PC-9 (cell line): ENCODE measurements at regions of chr15 and their contacts with region 1.

Region 1: DNA sequence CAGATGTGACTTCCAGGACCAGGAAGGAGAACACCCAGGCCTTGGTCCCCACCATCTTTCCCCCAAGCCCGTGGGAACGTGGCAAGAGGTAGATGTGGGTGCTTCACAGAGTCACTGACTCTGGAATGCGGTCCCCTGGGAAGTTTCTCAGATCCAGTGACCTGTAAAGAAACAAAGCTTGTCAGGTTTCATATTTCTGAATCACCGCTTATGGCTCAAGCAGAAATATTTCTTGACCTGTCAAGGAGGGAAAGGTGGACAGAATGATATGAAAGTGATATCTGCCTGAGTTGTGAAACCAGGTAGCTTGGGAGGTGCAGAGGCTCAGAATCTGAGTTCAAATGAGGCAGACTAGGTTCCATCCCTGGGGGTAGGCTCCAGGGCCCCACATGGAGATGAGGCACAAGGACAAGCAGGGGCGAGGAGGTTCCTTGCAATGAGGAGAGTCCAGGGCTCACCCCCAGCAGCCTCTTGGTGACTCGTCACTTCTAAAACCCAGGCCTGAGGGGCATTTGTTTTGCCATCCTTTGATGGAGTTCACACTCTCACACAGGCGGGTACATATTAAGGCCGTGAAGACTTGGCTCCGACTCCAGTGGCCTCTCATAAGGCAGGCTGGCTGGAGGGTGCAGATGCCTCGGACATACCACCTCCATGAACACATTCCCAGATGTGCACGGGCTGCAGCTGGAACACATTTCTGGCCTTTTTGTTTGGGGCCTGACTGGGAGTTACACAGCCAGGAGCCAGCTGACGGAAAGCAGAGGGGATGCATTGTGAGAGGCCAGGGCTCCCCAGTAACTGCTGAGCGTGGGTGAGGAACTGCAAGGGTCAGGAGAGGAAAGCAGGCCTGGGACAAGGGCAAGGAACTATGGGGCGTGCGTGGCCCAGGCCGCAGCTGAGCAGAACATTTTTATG is 1.3 kb downstream of the CILP start:
- DNase-seq: peak; percentile 44 to 86
- H3K4me3 ChIP-seq: no peak overlapping the region
- H3K27ac ChIP-seq: peak overlapping the region; percentile 50
- H3K4me1 ChIP-seq: peaks cover 34% of the 10 kb centered on the region
- H3K27me3 ChIP-seq: no peaks in the 10 kb centered on the region
- CTCF ChIP-seq: no peak

Region 2: DNA sequence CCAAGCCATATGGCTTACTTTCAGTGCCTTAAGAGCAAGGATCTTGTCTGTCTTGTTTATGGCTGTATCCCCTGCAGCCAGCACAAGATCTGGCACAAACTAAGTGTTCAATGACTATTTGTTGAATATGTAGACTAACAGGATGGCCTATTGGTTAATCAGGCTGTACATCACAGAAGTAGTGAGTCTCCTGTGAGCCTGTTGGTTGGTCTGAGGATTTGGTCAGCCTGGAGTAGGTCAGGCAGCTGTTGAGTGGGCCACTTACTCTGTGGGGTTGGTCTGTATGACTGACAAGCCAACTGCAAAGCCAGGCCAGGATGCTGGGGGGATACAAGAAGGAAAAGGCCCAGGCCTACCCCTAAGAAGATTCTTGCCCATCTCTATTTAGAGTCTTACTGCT is 34.7 kb after region 1 on chr15:
- CTCF ChIA-PET with region 1: interaction called, 14 read pairs
- POLR2A ChIA-PET with region 1: no interaction called
- intact Hi-C with region 1: no loop called
- DNase-seq: no peak
- H3K4me3 ChIP-seq: no peak overlapping the region
- H3K27ac ChIP-seq: no peak overlapping the region
- H3K4me1 ChIP-seq: no peaks in the 10 kb centered on the region
- H3K27me3 ChIP-seq: no peaks in the 10 kb centered on the region
- CTCF ChIP-seq: no peak

Region 3: GRCh38 chr15:65249641-65250040 is 39.7 kb after region 1 on chr15:
- CTCF ChIA-PET with region 1: no interaction called
- POLR2A ChIA-PET with region 1: no interaction called
- intact Hi-C with region 1: loop called (anchors 10 kb)
- DNase-seq: no peak
- H3K4me3 ChIP-seq: no peak overlapping the region
- H3K27ac ChIP-seq: no peak overlapping the region
- H3K4me1 ChIP-seq: no peaks in the 10 kb centered on the region
- H3K27me3 ChIP-seq: no peaks in the 10 kb centered on the region
- CTCF ChIP-seq: no peak